Heart right ventricle (tissue), 16 donors: ENCODE measurements at regions of chr2 and their contacts with region 1.

Region 1: DNA sequence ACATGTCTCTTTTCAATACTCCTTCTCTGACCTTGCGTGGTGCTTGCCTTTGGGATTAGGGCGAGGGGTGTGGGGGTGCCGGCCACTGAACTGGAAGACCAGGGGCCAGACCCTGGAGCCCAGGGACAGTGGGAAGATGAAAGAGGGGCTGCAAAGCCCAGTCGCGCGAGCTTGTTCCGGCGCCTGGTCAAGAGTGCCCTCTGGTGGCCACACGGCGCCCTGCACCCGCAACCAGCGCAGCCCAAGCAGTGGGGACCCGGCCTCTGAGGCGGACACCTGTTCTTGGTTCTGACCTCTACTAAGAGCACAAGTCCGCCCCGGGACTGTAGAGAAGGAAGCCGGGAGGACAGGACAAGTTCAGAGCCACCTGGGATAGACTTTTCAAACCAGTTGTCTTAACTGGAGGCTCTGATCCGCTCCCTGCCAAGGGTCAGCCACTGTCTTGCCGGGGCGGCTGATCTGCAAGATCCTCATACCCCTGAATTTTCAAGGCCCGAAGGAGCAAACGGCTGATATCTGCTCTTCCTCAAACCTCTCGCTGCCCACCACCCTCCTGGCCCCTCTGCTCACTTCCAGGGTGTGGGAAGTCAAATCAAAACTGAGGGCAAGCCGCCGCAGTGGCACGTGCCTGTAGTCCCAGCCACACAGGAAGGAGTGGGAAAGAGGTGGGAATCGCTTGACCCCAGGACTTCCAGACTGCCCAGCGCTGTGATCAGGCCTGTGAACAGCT is 14.9 kb upstream of the MSH6 start:
- DNase-seq: peak; percentile 57 to 75
- ATAC-seq: peak; percentile 63 to 86 (median 84)
- H3K4me3 ChIP-seq: no peak overlapping the region
- H3K27ac ChIP-seq: no peak overlapping the region
- H3K4me1 ChIP-seq: peaks cover 0 to 6% (median 0%) of the 10 kb centered on the region in 9 donors
- H3K27me3 ChIP-seq: peaks cover 0 to 4% (median 0%) of the 10 kb centered on the region in 7 donors
- CTCF ChIP-seq: peak; percentile 95 to 100 (median 99)

Region 2: GRCh38 chr2:47334356-47335136 is 433.5 kb before region 1 on chr2:
- intact Hi-C with region 1: loop called in 4 of 10 experiments (anchors 5 to 10 kb)
- DNase-seq: no peak
- ATAC-seq: peak; percentile 29 to 68 (median 39)
- H3K4me3 ChIP-seq: no peak overlapping the region
- H3K27ac ChIP-seq: peak overlapping the region in 7 of 10 donors; percentile 4 to 82 (median 47)
- H3K4me1 ChIP-seq: peaks cover 0 to 24% (median 8%) of the 10 kb centered on the region in 9 donors
- H3K27me3 ChIP-seq: no peaks in the 10 kb centered on the region
- CTCF ChIP-seq: no peak

Region 3: DNA sequence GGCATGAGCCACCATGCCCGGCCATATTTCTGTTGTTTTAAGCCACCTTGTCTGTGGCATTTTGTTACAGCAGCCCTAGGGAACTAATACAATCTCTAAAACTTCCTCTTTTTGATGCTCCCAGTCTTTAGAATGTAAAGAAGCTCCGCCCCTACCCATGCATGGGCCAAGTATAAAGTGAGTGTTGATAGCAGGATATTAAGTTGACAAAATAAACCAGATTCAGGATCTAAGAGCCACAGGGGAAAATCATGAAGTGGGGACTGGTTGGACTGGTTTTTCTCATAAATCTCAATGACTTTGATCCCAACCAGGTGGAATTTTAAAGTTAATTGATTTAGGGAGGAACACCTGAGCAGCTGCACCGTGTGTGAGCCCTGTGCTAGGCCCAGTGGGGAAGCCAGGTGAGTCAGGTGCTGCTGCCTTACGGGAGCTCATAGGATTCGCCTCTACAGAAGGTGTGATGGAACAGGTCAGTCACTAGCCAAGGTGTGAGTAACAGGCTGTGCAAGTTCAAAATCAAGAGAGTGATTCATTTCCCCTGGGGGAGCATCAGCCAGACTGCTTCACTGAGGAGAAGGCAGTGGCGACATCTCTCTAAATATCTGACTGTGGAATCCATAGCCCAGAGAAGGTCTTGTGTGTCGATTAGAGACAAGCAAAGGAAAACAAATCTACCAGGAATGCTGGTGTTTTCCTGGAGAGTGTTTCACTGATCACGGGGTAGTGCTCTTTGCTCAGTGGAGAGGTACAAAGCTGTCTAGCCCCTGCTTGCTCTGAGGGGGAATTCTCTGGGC is 428.1 kb before region 1 on chr2:
- intact Hi-C with region 1: loop called in 3 of 10 experiments (anchors 5 to 10 kb)
- DNase-seq: no peak
- ATAC-seq: no peak
- H3K4me3 ChIP-seq: no peak overlapping the region
- H3K27ac ChIP-seq: no peak overlapping the region
- H3K4me1 ChIP-seq: peaks cover 0 to 38% (median 14%) of the 10 kb centered on the region in 9 donors
- H3K27me3 ChIP-seq: peaks cover 0 to under 1% (median 0%) of the 10 kb centered on the region in 7 donors
- CTCF ChIP-seq: no peak

Region 4: GRCh38 chr2:47437287-47437686 is 330.8 kb before region 1 on chr2:
- intact Hi-C with region 1: loop called (anchors 1 to 5 kb)
- DNase-seq: peak in 1 of 2 donors; percentile 8
- ATAC-seq: peak in 2 of 8 donors; percentile 58 to 59
- H3K4me3 ChIP-seq: no peak overlapping the region
- H3K27ac ChIP-seq: no peak overlapping the region
- H3K4me1 ChIP-seq: peaks cover 0 to 4% (median 0%) of the 10 kb centered on the region in 9 donors
- H3K27me3 ChIP-seq: no peaks in the 10 kb centered on the region
- CTCF ChIP-seq: peak in 8 of 9 donors; percentile 43 to 78 (median 62)

Region 5: GRCh38 chr2:47520825-47521665 is 247.0 kb before region 1 on chr2:
- intact Hi-C with region 1: loop called in 1 of 10 experiments (anchors 10 kb)
- DNase-seq: peak; percentile 29 to 51
- ATAC-seq: peak; percentile 53 to 80 (median 72)
- H3K4me3 ChIP-seq: peak overlapping the region in 9 of 10 donors; percentile 24 to 59 (median 46)
- H3K27ac ChIP-seq: peak overlapping the region in 1 of 10 donors; percentile 76
- H3K4me1 ChIP-seq: peaks cover 0 to 15% (median 3%) of the 10 kb centered on the region in 9 donors
- H3K27me3 ChIP-seq: peaks cover 0 to 19% (median 7%) of the 10 kb centered on the region in 7 donors
- CTCF ChIP-seq: peak in 4 of 9 donors; percentile 26 to 39 (median 32)

Region 6: DNA sequence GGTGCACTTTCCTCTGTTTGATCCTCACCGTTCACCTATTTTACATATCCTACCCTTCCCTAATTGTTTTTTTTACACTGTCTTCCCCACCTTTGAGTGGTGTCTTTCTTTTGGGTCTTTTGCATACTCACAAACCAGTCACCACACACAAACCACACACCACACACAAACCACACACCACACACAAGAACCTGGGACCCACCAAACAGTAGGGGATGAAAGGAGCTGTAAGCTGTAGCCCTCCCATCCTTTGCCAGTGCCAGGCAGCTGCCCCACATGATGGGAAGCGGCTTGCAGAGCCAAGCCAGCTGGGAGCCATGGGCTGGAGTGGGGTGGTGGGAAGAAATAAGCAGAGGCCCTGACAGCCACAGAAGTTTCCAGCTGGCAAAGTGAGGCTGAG is 24.0 kb before region 1 on chr2:
- intact Hi-C with region 1: no loop called
- DNase-seq: no peak
- ATAC-seq: no peak
- H3K4me3 ChIP-seq: no peak overlapping the region
- H3K27ac ChIP-seq: no peak overlapping the region
- H3K4me1 ChIP-seq: no peaks in the 10 kb centered on the region
- H3K27me3 ChIP-seq: peaks cover 0 to 18% (median 0%) of the 10 kb centered on the region in 7 donors
- CTCF ChIP-seq: no peak